Gastrocnemius medialis (tissue), 4 donors: ENCODE measurements at regions of chr3 and their contacts with region 1.

Region 1: DNA sequence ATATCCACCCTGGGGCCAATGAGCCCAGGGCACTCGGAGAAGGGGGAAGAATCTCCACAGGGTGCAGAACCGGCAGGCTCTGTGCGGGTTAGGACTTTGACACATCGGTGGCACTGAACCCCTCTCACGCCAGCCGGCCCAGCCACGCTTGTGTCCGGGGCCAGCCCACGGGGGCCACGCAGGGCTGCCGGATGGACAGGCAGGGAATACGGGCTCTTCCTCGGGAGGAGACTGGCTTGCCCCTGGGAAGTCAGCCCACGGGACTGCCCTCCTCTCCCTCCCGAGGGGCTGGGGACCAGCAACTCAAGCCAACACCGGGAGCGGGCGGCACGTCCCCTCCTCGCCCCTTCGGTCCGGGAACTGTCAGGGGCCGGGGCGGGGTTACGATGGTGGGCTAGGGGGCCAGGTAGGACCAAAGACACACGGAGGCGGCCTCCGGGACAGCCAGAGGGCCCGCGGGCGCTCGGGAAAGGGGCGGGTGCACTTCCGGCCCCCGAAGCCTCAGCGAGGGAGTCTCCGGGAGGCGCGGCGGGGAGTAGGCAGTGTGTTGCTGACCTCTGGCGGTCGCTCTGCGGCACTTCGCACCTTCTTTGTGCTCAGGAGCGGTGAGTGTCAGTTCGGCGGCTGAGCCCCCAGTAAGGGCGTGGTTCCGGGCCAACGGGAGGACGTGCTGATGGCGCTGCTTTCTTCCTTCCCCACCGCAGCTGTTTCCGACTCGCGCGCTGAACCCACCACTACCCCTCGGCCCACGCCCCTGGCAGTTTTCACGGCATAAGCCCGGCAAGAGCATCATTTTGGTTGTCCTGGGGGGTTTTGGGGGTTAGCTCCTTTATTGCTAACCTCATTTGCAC is 5.1 kb upstream of the CYP8B1 start:
- DNase-seq: peak; percentile 75 to 76
- ATAC-seq: peak; percentile 97 to 99
- H3K4me3 ChIP-seq: peak overlapping the region; percentile 78 to 90 (median 84)
- H3K27ac ChIP-seq: peak overlapping the region; percentile 77 to 82 (median 81)
- H3K4me1 ChIP-seq: peaks cover 4 to 5% of the 10 kb centered on the region in 2 donors
- H3K27me3 ChIP-seq: no peaks in the 10 kb centered on the region
- CTCF ChIP-seq: peak; percentile 89 to 95 (median 92)
- POLR2A ChIP-seq: no peak

Region 2: DNA sequence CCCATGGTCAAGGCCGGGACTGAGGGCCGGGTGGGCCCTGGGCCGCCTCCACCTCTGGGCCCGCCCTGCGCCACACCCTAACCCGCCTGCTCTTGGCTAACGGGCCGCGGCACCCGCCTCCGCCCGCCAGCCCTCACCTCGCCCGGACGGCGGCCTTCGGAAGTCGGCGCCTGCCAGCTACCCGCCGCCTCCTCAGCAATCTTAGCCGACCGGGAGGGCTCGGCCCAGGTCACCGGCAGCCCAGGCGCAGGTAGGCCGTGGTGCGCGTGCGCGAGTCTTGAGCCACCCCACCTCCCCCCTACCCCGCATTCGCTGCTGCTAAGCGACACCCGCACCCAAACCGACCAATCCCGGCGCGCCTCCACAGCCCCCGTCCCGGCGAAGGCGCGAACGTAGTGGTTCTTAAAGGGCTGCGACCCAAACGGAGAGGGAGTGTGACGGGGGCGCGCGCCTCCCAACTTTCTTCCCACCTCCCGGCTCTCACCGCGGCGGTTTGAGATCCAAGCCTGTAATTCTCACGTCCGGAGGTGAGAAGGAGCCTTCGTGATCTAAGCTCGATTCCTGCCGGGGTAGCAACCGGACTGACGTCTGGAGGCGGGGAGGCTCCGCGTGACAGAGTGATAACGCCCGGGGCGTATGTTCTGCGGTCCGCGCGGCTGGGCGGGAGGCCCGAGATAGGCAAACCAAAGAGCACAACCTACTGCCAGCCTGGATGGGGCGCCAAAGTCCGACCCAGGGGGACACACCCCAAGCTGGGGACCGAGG is 298.9 kb before region 1 on chr3 and contains the start of gene SEC22C:
- in situ Hi-C with region 1: no loop called
- intact Hi-C with region 1: loop called (anchors 10 kb)
- DNase-seq: peak; percentile 96 to 97
- ATAC-seq: peak; percentile 96 to 98
- H3K4me3 ChIP-seq: peak within 1 kb of the TSS; percentile 71 to 82 (median 75)
- H3K27ac ChIP-seq: peak within 1 kb of the TSS; percentile 87 to 94 (median 92)
- H3K4me1 ChIP-seq: peaks cover 11 to 19% of the 10 kb centered on the region in 2 donors
- H3K27me3 ChIP-seq: no peaks in the 10 kb centered on the region
- CTCF ChIP-seq: peak in 3 of 5 experiments; percentile 15 to 43 (median 38)
- POLR2A ChIP-seq: peak; percentile 91 to 98
- total RNA-seq, gene SEC22C: 35.5 to 54.6 (median 40.6) TPM

Region 3: GRCh38 chr3:42831321-42831713 is 49.5 kb before region 1 on chr3:
- in situ Hi-C with region 1: loop called in 2 of 4 experiments (anchors 5 to 10 kb)
- intact Hi-C with region 1: loop called (anchors 1 kb)
- DNase-seq: peak; percentile 48 to 67
- ATAC-seq: peak; percentile 66 to 82
- H3K4me3 ChIP-seq: no peak overlapping the region
- H3K27ac ChIP-seq: no peak overlapping the region
- H3K4me1 ChIP-seq: no peaks in the 10 kb centered on the region
- H3K27me3 ChIP-seq: no peaks in the 10 kb centered on the region
- CTCF ChIP-seq: peak; percentile 66 to 74 (median 72)
- POLR2A ChIP-seq: no peak

Region 4: DNA sequence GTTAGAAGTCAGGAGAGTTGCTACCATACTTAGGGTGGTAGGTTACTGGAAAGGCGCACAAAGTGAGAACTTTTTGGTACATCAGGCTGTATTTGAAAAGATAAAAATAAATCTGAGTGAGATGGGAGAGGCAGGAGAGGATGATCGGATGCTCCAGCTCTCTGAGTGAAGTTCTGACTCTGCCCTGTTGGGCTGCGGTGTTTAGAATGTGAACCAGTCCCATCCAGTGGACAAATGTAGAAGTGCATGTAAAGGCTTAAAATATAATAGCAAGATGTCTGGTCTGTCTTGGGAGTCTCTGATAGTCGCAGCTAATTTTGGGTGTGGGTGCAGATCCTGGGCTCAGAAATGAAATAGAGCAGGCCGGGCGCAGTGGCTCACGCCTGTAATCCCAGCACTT is 41.2 kb before region 1 on chr3:
- in situ Hi-C with region 1: loop called in 2 of 4 experiments (anchors 5 to 10 kb)
- intact Hi-C with region 1: no loop called
- DNase-seq: peak in 1 of 2 donors; percentile 32
- ATAC-seq: peak; percentile 95 to 96
- H3K4me3 ChIP-seq: no peak overlapping the region
- H3K27ac ChIP-seq: no peak overlapping the region
- H3K4me1 ChIP-seq: no peaks in the 10 kb centered on the region
- H3K27me3 ChIP-seq: no peaks in the 10 kb centered on the region
- CTCF ChIP-seq: peak; percentile 70 to 87 (median 80)
- POLR2A ChIP-seq: no peak